ENCODE measurements at regions of chr4 and their contacts with region 1.

Region 1: GRCh38 chr4:26319467-26319948 is 1.3 kb upstream of the RBPJ start:
- DNase-seq: peak; percentile 95 to 99
- H3K4me3 ChIP-seq: peak overlapping the region; percentile 74
- H3K27ac ChIP-seq: peak overlapping the region; percentile 88
- H3K4me1 ChIP-seq: peaks cover 20% of the 10 kb centered on the region; the same call in 1 of the 2 replicates
- H3K27me3 ChIP-seq: no peaks in the 10 kb centered on the region
- CTCF ChIP-seq: no peak

Region 2: DNA sequence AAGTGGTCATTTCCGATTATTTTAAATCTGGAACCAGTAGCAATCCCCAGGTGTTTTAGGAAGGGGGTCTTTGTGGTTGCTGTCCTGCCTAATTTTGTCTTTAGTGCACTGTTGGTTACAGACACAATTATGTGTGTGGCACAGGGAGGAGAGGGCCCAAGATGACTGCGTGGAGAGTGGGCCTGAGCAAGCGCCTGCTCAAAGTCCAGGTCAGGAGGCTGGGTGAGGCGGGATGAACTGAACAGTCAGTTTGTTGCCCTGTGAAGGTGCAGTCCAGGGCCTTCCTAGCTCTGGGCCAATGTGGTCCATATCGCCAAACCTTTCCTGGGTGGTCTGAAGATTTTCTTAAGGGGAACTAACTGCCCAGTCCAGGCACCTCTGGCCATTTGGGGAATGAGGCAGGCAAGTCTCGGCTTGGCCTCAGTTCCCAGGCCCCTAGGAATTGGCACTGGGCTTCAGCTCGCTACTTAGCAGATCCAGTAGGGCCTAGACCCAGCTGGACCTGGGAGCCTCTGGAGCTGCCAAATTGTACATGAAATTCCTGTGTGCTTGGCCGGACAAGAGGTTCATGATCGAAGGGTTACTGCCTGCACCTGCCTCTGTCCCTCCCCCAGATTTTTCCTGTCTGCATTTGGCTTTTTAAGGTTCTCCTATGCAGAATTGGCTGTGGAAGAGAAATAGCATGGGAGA is 894.8 kb before region 1 on chr4:
- CTCF ChIA-PET with region 1: no interaction called
- POLR2A ChIA-PET with region 1: interaction called, 16 read pairs
- intact Hi-C with region 1: no loop called
- DNase-seq: no peak
- H3K4me3 ChIP-seq: no peak overlapping the region
- H3K27ac ChIP-seq: no peak overlapping the region
- H3K4me1 ChIP-seq: no peaks in the 10 kb centered on the region
- H3K27me3 ChIP-seq: no peaks in the 10 kb centered on the region
- CTCF ChIP-seq: no peak

Region 3: GRCh38 chr4:25913851-25914669 is 405.4 kb before region 1 on chr4 and contains the start of gene SMIM20:
- CTCF ChIA-PET with region 1: no interaction called
- POLR2A ChIA-PET with region 1: no interaction called
- intact Hi-C with region 1: loop called (anchors 5 kb)
- DNase-seq: peak; percentile 70 to 90
- H3K4me3 ChIP-seq: peak within 1 kb of the TSS; percentile 62
- H3K27ac ChIP-seq: peak within 1 kb of the TSS; percentile 93
- H3K4me1 ChIP-seq: peaks cover 10% of the 10 kb centered on the region
- H3K27me3 ChIP-seq: no peaks in the 10 kb centered on the region
- CTCF ChIP-seq: no peak
- total RNA-seq, gene SMIM20: 40.5 and 44.2 TPM in 2 replicates

Region 4: DNA sequence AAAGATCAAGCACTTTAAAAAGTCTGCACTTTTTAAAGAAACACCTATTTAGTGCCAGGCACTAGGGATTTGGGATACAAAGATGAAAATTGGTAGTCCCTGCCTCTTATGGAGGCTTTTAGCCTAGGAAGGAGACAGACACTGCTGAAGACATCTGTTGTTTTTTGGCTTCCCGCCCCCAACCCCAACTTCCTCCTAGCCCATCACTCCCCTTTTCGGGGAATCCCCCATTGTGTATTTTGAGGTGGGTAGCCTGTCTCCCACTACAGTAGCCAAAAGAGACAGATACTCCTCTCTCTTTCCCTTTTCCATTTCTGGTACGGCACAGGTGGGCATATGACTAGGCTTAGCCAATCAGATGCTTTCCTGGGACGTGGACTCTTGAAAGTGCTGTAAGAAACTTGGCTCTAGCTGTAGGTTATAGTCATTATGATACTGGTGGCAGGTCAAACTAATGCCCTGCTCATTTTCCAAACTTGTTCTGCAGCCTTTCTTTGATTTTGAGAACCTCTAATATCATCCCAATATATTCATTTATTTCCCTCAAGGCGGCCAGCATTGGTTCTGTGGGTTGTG is 193.3 kb before region 1 on chr4:
- CTCF ChIA-PET with region 1: interaction called, 4 read pairs
- POLR2A ChIA-PET with region 1: no interaction called
- intact Hi-C with region 1: loop called (anchors 1 kb)
- DNase-seq: no peak
- H3K4me3 ChIP-seq: no peak overlapping the region
- H3K27ac ChIP-seq: no peak overlapping the region
- H3K4me1 ChIP-seq: 0 out of 2 replicates have a peak, but pooled peaks cover 4% of the 10 kb centered on the region
- H3K27me3 ChIP-seq: no peaks in the 10 kb centered on the region
- CTCF ChIP-seq: no peak

Region 5: DNA sequence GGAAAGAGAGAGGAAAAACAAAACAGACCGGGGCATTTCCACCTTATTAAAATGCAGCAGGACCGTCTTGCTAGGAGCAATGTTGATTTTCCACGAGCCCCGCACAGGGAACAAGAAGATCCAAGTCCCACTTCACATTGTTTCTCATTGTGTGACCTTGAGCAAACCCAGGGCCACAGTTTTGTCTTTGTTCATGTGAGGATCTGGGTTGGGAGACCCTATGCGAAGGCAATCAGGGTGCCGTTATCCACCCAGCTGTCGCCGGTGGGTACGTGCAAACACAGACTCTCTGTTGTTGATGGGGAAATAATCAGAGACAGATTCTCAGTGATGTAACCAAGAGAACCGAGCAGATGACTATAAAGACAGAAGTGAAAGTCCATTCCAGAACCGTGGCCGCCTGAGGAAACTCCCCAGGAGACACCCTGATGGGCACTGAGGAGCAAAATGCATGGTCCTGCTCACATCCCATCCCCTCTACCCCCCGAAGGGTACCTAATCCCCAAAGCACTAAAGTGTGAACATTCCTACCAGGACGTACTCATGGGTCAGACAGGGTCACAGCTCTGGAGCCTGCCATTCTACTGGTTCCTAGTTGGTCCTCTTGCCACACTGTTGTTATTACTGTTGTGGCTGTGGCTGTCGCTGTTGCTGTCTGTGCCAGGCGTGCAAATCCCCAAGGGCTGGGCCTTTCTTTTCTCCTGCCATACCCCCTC is 101.4 kb before region 1 on chr4:
- CTCF ChIA-PET with region 1: no interaction called
- POLR2A ChIA-PET with region 1: no interaction called
- intact Hi-C with region 1: loop called (anchors 2 kb)
- DNase-seq: no peak
- H3K4me3 ChIP-seq: no peak overlapping the region
- H3K27ac ChIP-seq: no peak overlapping the region
- H3K4me1 ChIP-seq: peaks cover 48% of the 10 kb centered on the region
- H3K27me3 ChIP-seq: no peaks in the 10 kb centered on the region
- CTCF ChIP-seq: no peak

Region 6: GRCh38 chr4:26281881-26282280 is 37.6 kb before region 1 on chr4:
- CTCF ChIA-PET with region 1: no interaction called
- POLR2A ChIA-PET with region 1: interaction called, 40 read pairs
- intact Hi-C with region 1: no loop called
- DNase-seq: peak in 1 of 2 experiments; percentile 50
- H3K4me3 ChIP-seq: no peak overlapping the region
- H3K27ac ChIP-seq: no peak overlapping the region
- H3K4me1 ChIP-seq: peaks cover 21% of the 10 kb centered on the region
- H3K27me3 ChIP-seq: no peaks in the 10 kb centered on the region
- CTCF ChIP-seq: no peak

Region 7: DNA sequence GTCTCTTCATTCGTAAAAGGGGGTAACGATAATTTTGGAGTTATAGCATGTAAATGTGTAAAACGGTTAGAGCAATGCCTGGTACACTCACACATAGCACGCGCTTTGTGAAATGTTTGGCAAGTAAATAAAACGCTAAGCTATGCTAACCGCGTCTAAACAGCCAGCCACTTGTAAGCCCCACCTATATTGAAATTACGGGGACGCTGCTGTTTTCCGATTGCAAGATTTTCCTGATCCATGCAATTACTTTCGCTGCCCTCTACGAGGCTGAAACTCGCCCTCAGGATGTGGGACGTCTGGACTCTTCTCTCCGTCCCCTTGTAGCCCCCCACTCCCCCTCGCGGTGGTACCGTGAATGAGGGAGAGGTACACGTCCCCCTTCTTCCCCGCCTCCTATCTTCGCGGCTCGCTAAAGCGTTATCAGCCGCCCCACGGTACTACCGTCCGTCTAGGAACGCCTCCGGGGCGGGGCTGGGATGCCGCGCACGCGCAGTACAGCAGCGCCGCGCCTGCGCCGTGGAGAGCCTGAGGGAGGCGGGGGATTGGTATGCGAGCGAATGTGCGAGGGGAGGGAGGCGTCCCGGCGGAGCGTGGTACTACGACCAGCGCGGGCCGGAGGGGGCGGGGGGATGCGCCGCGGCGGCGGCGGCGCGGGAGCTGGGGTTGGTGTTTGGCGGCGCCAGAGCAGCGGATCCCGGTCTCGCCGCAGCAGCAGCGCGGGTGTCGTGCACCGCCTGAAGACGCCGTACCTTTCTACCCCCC is 540.8 kb after region 1 on chr4 and contains the start of gene STIM2:
- CTCF ChIA-PET with region 1: no interaction called
- POLR2A ChIA-PET with region 1: no interaction called
- intact Hi-C with region 1: loop called (anchors 5 kb)
- DNase-seq: peak; percentile 84 to 98
- H3K4me3 ChIP-seq: peak within 1 kb of the TSS; percentile 65
- H3K27ac ChIP-seq: peak within 1 kb of the TSS; percentile 67
- H3K4me1 ChIP-seq: peaks cover 26% of the 10 kb centered on the region
- H3K27me3 ChIP-seq: no peaks in the 10 kb centered on the region
- CTCF ChIP-seq: peak; percentile 24; the same call in 1 of the 2 replicates
- total RNA-seq, gene STIM2: 21.8 and 30.2 TPM in 2 replicates

Region 8: DNA sequence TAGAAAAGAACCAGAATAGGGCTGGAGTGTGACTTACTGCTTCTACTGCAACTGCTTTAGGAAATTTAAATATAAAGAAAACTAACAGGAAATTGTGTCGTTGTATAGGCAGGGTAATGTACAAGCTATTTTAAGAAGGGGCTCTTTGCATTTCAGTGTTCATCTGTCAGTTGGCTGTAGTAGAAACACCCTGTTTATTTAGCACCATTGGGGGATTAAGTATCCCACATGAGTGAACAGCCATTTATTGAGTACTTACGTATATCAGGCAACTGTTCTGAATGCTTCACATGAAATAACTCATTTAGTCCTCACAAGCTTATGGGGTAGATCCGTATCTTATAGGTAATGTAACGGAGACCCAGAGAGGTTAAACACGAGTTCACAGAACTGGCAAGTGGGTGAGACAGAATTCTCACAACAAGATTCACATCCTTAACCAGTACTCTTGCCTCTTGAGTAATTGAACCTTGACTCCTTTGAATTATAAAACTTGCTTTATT is 565.0 kb after region 1 on chr4:
- CTCF ChIA-PET with region 1: no interaction called
- POLR2A ChIA-PET with region 1: no interaction called
- intact Hi-C with region 1: no loop called
- DNase-seq: no peak
- H3K4me3 ChIP-seq: no peak overlapping the region
- H3K27ac ChIP-seq: no peak overlapping the region
- H3K4me1 ChIP-seq: no peaks in the 10 kb centered on the region
- H3K27me3 ChIP-seq: no peaks in the 10 kb centered on the region
- CTCF ChIP-seq: no peak